ENCODE measurements at regions of chr14 and their contacts with region 1.

Region 1: GRCh38 chr14:23301288-23301968 is 1.2 kb downstream of the PPP1R3E start:
- DNase-seq: peak; percentile 99
- ATAC-seq: peak; percentile 84
- H3K4me3 Mint-ChIP-seq: peak overlapping the region; percentile 100
- H3K27ac Mint-ChIP-seq: peak overlapping the region; percentile 94
- H3K4me1 Mint-ChIP-seq: peaks cover 18% of the 10 kb centered on the region
- H3K27me3 Mint-ChIP-seq: peaks cover 10% of the 10 kb centered on the region

Region 2: GRCh38 chr14:21455911-21456667 is 1845.3 kb before region 1 on chr14 and contains the start of gene CHD8:
- CTCF ChIA-PET with region 1: no interaction called
- POLR2A ChIA-PET with region 1: no interaction called
- intact Hi-C with region 1: loop called in 1 of 2 experiments (anchors 10 kb)
- DNase-seq: peak; percentile 100
- ATAC-seq: peak; percentile 99
- H3K4me3 Mint-ChIP-seq: peak within 1 kb of the TSS; percentile 97
- H3K27ac Mint-ChIP-seq: peak within 1 kb of the TSS; percentile 99
- H3K4me1 Mint-ChIP-seq: peaks cover 30% of the 10 kb centered on the region
- H3K27me3 Mint-ChIP-seq: no peaks in the 10 kb centered on the region
- total RNA-seq, gene CHD8: 84.3 to 104 TPM

Region 3: DNA sequence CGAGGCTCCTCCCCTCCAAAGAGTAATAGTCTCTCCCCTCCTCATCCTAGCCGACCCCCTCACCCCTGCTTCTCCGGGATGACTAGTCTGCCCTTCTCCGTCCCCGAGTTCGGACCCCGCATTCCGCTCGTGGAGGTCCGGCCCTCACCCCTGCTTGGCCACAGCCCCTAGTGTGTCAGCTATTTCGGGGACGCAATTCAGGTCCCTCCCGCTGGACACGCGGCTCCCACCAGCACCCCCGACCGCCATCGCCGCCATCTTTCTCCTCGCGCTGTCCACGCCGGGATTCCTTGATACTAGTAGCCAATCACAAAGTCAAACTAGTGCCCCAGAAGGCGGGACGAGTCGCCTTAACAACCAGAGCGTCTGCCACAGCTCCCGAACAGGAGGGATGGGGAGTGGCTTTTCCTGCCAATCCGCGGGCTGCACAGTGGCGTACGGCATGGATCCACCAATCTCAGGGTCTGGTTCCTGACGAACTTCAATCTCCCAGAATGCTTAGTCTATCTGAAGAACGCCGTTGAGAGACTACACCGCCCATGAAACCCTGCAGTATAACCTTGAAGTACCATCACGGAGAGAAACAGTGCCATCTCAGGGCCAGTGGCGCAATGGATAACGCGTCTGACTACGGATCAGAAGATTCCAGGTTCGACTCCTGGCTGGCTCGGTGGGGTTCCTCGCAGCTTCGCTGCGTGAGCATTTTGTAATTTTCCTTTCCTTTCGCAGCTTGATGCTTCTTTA is 372.2 kb before region 1 on chr14 and contains the start of gene PRMT5:
- CTCF ChIA-PET with region 1: no interaction called
- POLR2A ChIA-PET with region 1: interaction called, 3 read pairs
- intact Hi-C with region 1: loop called in 1 of 2 experiments (anchors 5 kb)
- DNase-seq: peak; percentile 99
- ATAC-seq: peak; percentile 98
- H3K4me3 Mint-ChIP-seq: no peak within 1 kb of the TSS
- H3K27ac Mint-ChIP-seq: no peak within 1 kb of the TSS
- H3K4me1 Mint-ChIP-seq: peaks cover 39% of the 10 kb centered on the region
- H3K27me3 Mint-ChIP-seq: no peaks in the 10 kb centered on the region
- total RNA-seq, gene PRMT5: 121 to 151 TPM

Region 4: GRCh38 chr14:23095196-23096108 is 206.0 kb before region 1 on chr14 and contains the start of gene C14orf119:
- CTCF ChIA-PET with region 1: interaction called, 13 read pairs
- POLR2A ChIA-PET with region 1: interaction called, 17 read pairs
- intact Hi-C with region 1: loop called in 1 of 2 experiments (anchors 1 kb)
- DNase-seq: peak; percentile 100
- ATAC-seq: peak; percentile 93
- H3K4me3 Mint-ChIP-seq: no peak within 1 kb of the TSS
- H3K27ac Mint-ChIP-seq: no peak within 1 kb of the TSS
- H3K4me1 Mint-ChIP-seq: peaks cover 19% of the 10 kb centered on the region
- H3K27me3 Mint-ChIP-seq: no peaks in the 10 kb centered on the region
- total RNA-seq, gene C14orf119: 43.8 to 51.5 TPM

Region 5: DNA sequence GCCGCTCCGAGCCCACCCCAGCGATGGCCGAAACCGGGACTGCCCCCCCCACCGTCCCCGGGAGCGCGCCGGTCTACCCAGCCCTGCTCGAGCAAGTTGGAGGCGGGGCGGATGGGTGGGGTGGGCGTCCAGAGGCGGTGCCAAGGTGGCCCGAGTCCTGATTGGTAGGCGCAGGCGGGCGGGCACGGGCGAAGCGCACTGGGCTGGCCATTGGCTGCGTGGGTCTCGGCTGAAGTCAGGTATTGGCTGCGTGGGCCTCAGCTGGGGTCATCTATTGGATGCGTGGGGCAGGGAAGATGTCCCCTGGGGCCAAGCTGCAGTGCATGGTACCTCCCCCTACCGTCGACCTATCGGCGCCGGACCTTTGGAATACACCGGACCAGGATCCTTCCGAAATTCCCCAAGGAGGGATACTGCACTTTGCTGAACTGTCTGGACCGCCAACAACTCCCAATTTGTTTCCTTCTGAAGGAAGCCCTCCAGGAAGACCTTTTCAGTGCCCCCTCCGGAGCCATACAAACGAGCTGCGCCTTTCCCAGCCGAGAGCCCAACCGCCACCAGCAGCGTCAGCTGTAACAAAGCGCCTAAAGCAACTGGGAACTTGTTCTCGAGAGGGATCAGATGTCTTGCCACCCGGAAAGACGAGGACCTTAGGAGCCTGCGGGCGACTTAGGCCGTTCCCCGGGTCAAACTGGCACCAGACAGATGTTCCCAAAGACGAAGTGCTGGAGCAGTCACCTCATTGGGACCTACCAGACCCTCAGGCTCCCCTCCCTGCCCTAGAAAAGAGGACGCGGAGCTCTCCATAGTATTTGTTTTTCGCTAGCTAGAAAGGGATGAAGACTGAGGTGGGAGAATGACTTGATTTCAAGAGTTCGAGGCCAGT is 15.2 kb before region 1 on chr14 and contains the start of gene HOMEZ:
- CTCF ChIA-PET with region 1: interaction called, 33 read pairs
- POLR2A ChIA-PET with region 1: interaction called, 10 read pairs
- intact Hi-C with region 1: loop called (anchors 1 kb)
- DNase-seq: peak; percentile 99
- ATAC-seq: peak; percentile 98
- H3K4me3 Mint-ChIP-seq: peak within 1 kb of the TSS; percentile 99
- H3K27ac Mint-ChIP-seq: peak within 1 kb of the TSS; percentile 95
- H3K4me1 Mint-ChIP-seq: peaks cover 18% of the 10 kb centered on the region
- H3K27me3 Mint-ChIP-seq: no peaks in the 10 kb centered on the region
- total RNA-seq, gene HOMEZ: 13.7 to 17.5 TPM

Region 6: GRCh38 chr14:23555882-23556699 is 254.7 kb after region 1 on chr14 and contains the start of gene THTPA:
- CTCF ChIA-PET with region 1: no interaction called
- POLR2A ChIA-PET with region 1: no interaction called
- intact Hi-C with region 1: loop called in 1 of 2 experiments (anchors 1 kb)
- DNase-seq: peak; percentile 96
- ATAC-seq: peak; percentile 83
- H3K4me3 Mint-ChIP-seq: peak within 1 kb of the TSS; percentile 95
- H3K27ac Mint-ChIP-seq: peak within 1 kb of the TSS; percentile 93
- H3K4me1 Mint-ChIP-seq: peaks cover 36% of the 10 kb centered on the region
- H3K27me3 Mint-ChIP-seq: no peaks in the 10 kb centered on the region
- total RNA-seq, gene THTPA: 8.3 to 8.5 TPM

Region 7: DNA sequence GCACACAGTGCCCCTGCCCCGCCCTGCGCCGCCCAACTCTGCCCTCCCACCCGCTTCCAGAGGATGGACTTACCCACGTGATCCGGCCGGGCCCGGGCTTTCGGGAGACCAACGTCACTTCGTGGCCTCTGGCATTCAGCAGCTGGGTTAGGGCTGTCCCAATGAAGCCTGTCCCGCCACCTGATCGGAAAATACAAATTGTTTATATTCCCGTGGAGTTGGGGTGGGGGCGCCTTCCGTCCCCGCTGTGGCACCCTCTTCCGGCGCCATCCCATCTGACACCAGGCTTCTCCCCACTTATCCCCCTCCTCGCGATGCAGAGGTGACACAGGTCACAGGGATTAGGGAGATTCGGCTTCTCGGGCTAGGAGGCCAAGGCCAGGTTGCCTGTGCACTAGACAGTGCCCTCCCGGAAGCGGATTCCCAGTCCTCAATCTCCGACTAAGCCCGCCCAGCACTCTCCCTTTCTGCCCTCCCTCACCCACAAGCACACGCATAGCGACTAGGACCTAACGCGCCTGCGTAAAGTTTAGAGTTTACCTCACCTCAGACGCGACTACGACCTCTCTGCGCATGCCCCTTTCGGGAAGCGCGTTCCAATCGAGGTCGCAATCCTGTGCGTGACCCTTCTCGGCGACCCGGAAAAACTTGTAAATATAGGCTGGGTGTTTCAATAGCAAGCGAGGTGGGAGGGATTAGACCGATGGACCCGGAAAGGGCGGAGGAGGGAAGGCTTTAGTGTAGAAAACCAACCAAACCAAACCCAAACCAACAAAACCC is 1141.0 kb after region 1 on chr14 and contains the start of gene SDR39U1:
- CTCF ChIA-PET with region 1: no interaction called
- POLR2A ChIA-PET with region 1: no interaction called
- intact Hi-C with region 1: loop called in 1 of 2 experiments (anchors 5 kb)
- DNase-seq: peak; percentile 98
- ATAC-seq: peak; percentile 92
- H3K4me3 Mint-ChIP-seq: peak within 1 kb of the TSS; percentile 97
- H3K27ac Mint-ChIP-seq: peak within 1 kb of the TSS; percentile 99
- H3K4me1 Mint-ChIP-seq: peaks cover 41% of the 10 kb centered on the region
- H3K27me3 Mint-ChIP-seq: no peaks in the 10 kb centered on the region
- total RNA-seq, gene SDR39U1: 40.9 to 47.8 TPM